HepG2 (cell line): ENCODE measurements at regions of chr20 and their contacts with region 1.

Region 1: GRCh38 chr20:56392282-56393137 is at the start of gene CSTF1:
- DNase-seq: peak; percentile 100
- ATAC-seq: peak; percentile 95
- H3K4me3 ChIP-seq: peak within 1 kb of the TSS; percentile 92 to 94 (median 93)
- H3K27ac ChIP-seq: peak within 1 kb of the TSS; percentile 88
- H3K4me1 ChIP-seq: peaks cover 50% of the 10 kb centered on the region
- H3K27me3 ChIP-seq: peaks cover 0 to 4% of the 10 kb centered on the region in 2 experiments; a peak in 1 of 5 replicates
- CTCF ChIP-seq: peak; percentile 39; the same call in 1 of the 2 replicates
- EP300 ChIP-seq: peak; percentile 78 to 91; a peak in 3 of 4 replicates
- POLR2A ChIP-seq: peak; percentile 60 to 85
- RAD21 ChIP-seq: peak; percentile 59
- total RNA-seq, gene CSTF1: 70.9 and 105 TPM in 2 replicates

Region 2: DNA sequence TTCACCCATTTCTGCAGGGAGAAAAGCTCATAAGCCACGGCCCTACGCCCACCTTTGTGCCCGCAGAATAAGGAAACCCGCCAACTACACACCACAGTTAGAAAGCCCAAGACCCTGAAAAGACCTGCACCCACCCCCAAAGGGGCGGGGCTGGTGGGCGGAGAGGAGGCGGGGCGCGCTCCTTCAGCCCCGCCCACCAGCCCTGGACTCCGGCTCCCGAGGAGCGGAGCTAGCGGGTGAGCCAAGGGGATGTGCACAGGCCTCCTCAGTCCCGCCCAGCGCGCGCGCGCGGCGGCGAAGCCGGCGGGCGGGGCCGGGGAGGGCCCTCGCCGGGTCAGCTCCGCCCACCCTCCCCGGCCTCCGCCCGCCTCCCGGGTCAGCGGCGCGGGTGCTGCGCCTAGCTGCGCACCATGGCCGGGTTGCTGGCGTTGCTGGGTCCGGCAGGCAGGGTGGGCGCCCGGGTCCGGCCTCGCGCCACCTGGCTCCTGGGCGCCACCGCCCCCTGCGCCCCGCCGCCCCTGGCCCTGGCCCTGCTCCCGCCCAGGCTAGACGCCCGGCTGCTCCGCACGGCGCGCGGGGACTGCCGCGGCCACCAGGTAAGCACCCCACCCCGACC is 33.8 kb before region 1 on chr20 and contains the start of gene FAM210B:
- CTCF ChIA-PET with region 1: no interaction called
- POLR2A ChIA-PET with region 1: interaction called, 91 read pairs
- in situ Hi-C with region 1: no loop called
- intact Hi-C with region 1: loop called (anchors 1 kb)
- DNase-seq: peak; percentile 90
- ATAC-seq: peak; percentile 83
- H3K4me3 ChIP-seq: peak within 1 kb of the TSS; percentile 83 to 94 (median 93)
- H3K27ac ChIP-seq: peak within 1 kb of the TSS; percentile 76
- H3K4me1 ChIP-seq: peaks cover 26% of the 10 kb centered on the region
- H3K27me3 ChIP-seq: no peaks in the 10 kb centered on the region; a peak in 1 of 5 replicates
- CTCF ChIP-seq: no peak
- EP300 ChIP-seq: peak in 1 of 2 experiments; percentile 24; a peak in 1 of 4 replicates
- POLR2A ChIP-seq: peak; percentile 55 to 86; a peak in 3 of 4 replicates
- RAD21 ChIP-seq: no peak; the same call in 1 of the 2 replicates
- total RNA-seq, gene FAM210B: 75.9 and 88.4 TPM in 2 replicates

Region 3: GRCh38 chr20:56373940-56374339 is 18.6 kb before region 1 on chr20:
- CTCF ChIA-PET with region 1: no interaction called
- POLR2A ChIA-PET with region 1: interaction called, 14 read pairs
- in situ Hi-C with region 1: no loop called
- intact Hi-C with region 1: no loop called
- DNase-seq: peak; percentile 70
- ATAC-seq: peak; percentile 55
- H3K4me3 ChIP-seq: no peak overlapping the region
- H3K27ac ChIP-seq: peak overlapping the region; percentile 14
- H3K4me1 ChIP-seq: no peaks in the 10 kb centered on the region
- H3K27me3 ChIP-seq: no peaks in the 10 kb centered on the region
- CTCF ChIP-seq: no peak
- EP300 ChIP-seq: peak in 1 of 2 experiments; percentile 10; a peak in 1 of 4 replicates
- POLR2A ChIP-seq: no peak
- RAD21 ChIP-seq: no peak

Region 4: GRCh38 chr20:56380375-56380774 is 12.1 kb before region 1 on chr20:
- CTCF ChIA-PET with region 1: no interaction called
- POLR2A ChIA-PET with region 1: interaction called, 17 read pairs
- in situ Hi-C with region 1: no loop called
- intact Hi-C with region 1: no loop called
- DNase-seq: no peak
- ATAC-seq: no peak
- H3K4me3 ChIP-seq: no peak overlapping the region
- H3K27ac ChIP-seq: no peak overlapping the region
- H3K4me1 ChIP-seq: peaks cover 8% of the 10 kb centered on the region
- H3K27me3 ChIP-seq: no peaks in the 10 kb centered on the region
- CTCF ChIP-seq: no peak
- EP300 ChIP-seq: no peak
- POLR2A ChIP-seq: no peak
- RAD21 ChIP-seq: no peak

Region 5: DNA sequence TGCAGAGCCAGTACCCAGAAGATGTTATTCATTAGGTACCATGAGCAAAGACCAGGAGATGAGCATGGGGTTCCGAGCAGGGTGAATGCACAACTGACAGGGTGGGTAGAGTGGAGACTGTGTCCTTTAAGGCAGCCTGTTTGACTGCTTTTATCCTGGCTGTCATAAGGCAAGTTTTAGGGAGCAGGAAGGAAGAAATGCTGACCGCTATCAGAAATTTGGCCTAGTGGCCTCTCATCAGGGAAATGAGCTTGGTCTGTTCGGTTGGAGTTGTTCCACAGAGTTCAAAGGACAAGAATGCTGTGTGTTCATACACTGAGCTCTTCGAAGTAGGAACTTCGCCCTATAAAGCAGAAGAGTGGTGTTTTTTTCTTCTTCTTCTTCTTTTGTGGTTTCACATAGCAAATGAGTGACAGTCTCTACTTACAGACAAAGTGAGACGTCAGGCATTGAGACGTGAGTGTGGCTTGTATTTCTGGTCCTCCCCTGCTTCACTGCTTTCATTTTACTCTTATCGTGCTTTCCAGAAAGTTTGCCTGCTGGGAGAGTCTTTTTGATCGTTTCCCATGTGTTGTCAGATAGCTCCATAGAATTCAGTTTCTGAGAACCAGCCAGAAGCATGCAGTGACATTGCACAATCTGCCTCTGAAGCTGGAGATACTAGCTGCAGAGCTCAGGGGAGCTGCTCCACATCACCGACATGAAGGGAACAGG is 19.4 kb after region 1 on chr20 and contains the start of gene CASS4:
- CTCF ChIA-PET with region 1: no interaction called
- POLR2A ChIA-PET with region 1: interaction called, 50 read pairs
- in situ Hi-C with region 1: no loop called
- intact Hi-C with region 1: no loop called
- DNase-seq: peak; percentile 68
- ATAC-seq: peak; percentile 90
- H3K4me3 ChIP-seq: peak within 1 kb of the TSS; percentile 37 to 58 (median 55)
- H3K27ac ChIP-seq: peak within 1 kb of the TSS; percentile 59
- H3K4me1 ChIP-seq: peaks cover 32% of the 10 kb centered on the region
- H3K27me3 ChIP-seq: no peaks in the 10 kb centered on the region
- CTCF ChIP-seq: no peak
- EP300 ChIP-seq: peak in 1 of 2 experiments; percentile 75; a peak in 3 of 4 replicates
- POLR2A ChIP-seq: peak in 1 of 2 experiments; percentile 16; a peak in 1 of 4 replicates
- RAD21 ChIP-seq: no peak
- total RNA-seq, gene CASS4: 0.38 and 0.49 TPM in 2 replicates

Region 6: GRCh38 chr20:56422076-56422823 is 29.7 kb after region 1 on chr20:
- CTCF ChIA-PET with region 1: no interaction called
- POLR2A ChIA-PET with region 1: interaction called, 5 read pairs
- in situ Hi-C with region 1: no loop called
- intact Hi-C with region 1: loop called (anchors 2 kb)
- DNase-seq: peak; percentile 81
- ATAC-seq: peak; percentile 74
- H3K4me3 ChIP-seq: peak overlapping the region; percentile 3 to 8 (median 6); a peak in 2 of 6 replicates
- H3K27ac ChIP-seq: no peak overlapping the region
- H3K4me1 ChIP-seq: peaks cover 66% of the 10 kb centered on the region
- H3K27me3 ChIP-seq: no peaks in the 10 kb centered on the region
- CTCF ChIP-seq: peak; percentile 27
- EP300 ChIP-seq: no peak
- POLR2A ChIP-seq: no peak
- RAD21 ChIP-seq: no peak

Region 7: GRCh38 chr20:56468316-56469082 is 76.0 kb after region 1 on chr20 and contains the start of gene RTF2:
- CTCF ChIA-PET with region 1: no interaction called
- POLR2A ChIA-PET with region 1: interaction called, 9 read pairs
- in situ Hi-C with region 1: loop called (anchors 5 kb)
- intact Hi-C with region 1: loop called (anchors 2 kb)
- DNase-seq: peak; percentile 89
- ATAC-seq: peak; percentile 99
- H3K4me3 ChIP-seq: peak within 1 kb of the TSS; percentile 90 to 97 (median 96)
- H3K27ac ChIP-seq: peak within 1 kb of the TSS; percentile 53
- H3K4me1 ChIP-seq: peaks cover 29% of the 10 kb centered on the region
- H3K27me3 ChIP-seq: no peaks in the 10 kb centered on the region; a peak in 2 of 5 replicates
- CTCF ChIP-seq: peak; percentile 26; the same call in 1 of the 2 replicates
- EP300 ChIP-seq: no peak
- POLR2A ChIP-seq: peak; percentile 88 to 89
- RAD21 ChIP-seq: peak; percentile 35; the same call in 1 of the 2 replicates
- total RNA-seq, gene RTF2: 142 and 202 TPM in 2 replicates